GM10248 (cell line): ENCODE measurements at regions of chr19 and their contacts with region 1.

Region 1: DNA sequence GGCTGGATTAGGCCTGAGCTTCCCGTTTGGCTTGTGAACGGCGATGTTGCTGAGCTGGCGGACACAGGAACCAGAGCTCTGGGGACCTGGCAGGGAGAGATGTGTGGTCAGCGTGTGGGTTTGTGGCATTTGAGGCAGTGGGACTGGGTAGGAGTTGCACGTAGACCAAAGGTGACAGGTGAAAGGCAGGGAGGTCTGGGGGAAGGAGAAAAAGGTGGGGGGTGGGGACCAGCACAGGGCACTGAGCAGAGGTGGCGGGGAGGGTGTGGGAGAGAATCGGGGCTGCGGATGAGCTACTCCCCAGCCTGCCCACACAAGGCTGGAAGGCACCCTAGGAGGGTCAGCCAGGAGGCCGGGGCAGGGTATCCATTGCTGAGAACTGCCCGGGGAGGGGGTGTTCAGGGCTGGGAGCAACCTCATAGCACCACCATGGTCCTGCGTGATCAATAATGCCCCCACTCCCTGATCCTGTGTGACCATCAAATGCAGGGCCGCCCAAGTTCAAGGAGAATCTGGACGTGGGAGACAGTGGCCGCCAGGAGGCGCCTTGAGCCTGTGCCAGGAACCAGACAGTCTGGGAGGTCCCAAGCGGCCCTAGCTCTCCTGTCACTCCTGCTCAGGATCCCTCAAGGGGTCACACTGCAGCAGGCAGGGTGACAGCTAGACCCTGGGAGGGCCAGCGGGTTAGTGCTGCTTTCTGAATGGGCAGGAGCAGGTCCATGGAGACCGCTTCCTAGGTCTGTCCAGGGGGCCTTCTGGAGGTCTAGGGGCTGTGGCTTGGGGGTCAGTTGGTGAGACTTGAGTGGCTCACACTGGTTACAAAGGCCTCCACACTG is 12.8 kb upstream of the SELENOW start:
- DNase-seq: peak; percentile 73
- CTCF ChIP-seq: peak; percentile 68

Region 2: GRCh38 chr19:47750752-47751151 is 15.0 kb before region 1 on chr19:
- CTCF ChIA-PET with region 1: interaction called, 13 read pairs
- POLR2A ChIA-PET with region 1: interaction called, 3 read pairs
- DNase-seq: no peak
- CTCF ChIP-seq: no peak

Region 3: GRCh38 chr19:47778089-47778953 is 12.6 kb after region 1 on chr19 and contains the start of gene SELENOW:
- CTCF ChIA-PET with region 1: interaction called, 14 read pairs
- POLR2A ChIA-PET with region 1: no interaction called
- DNase-seq: peak; percentile 96
- CTCF ChIP-seq: no peak

Region 4: GRCh38 chr19:47854459-47854858 is 88.7 kb after region 1 on chr19:
- CTCF ChIA-PET with region 1: no interaction called
- POLR2A ChIA-PET with region 1: no interaction called
- DNase-seq: no peak
- CTCF ChIP-seq: no peak